Mammary epithelial cell (primary cell): ENCODE measurements at regions of chr6 and their contacts with region 1.

Region 1: DNA sequence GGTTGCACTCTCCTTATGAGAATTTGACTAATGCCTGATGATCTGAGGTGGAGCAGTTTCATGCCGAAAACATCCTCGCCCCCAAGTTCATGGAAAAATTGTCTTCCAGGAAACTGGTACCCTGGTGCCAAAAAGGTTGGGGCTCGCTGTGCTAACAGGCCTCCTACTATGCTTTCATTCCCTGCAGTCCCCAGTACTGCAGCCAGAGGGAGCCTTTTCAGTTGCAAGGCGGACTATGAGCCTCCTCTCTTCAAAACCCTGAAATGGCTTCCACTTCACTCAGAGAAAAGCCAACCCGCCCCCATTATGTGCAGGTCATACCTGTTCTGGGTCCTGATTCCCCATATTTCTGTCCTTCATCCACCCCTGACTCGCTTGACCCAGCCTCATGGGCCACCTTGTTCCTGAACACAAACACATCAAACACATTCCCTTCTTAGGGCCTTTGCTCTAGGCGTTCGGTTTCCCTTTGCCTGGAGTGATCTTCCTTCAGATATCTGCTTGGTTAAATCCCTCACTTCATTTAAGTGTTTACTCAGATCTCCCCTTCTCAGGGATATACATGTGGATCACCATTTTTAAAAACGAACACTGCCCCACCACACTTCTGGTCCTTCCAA is 173.7 kb downstream of the PHACTR1 start:
- DNase-seq: no peak
- H3K4me3 ChIP-seq: no peak overlapping the region
- H3K27ac ChIP-seq: no peak overlapping the region
- H3K4me1 ChIP-seq: no peaks in the 10 kb centered on the region
- H3K27me3 ChIP-seq: no peaks in the 10 kb centered on the region
- CTCF ChIP-seq: peak; percentile 53 to 59

Region 2: GRCh38 chr6:12637960-12638641 is 252.2 kb before region 1 on chr6:
- CTCF ChIA-PET with region 1: interaction called, 5 read pairs
- dilution Hi-C with region 1: no loop called
- in situ Hi-C with region 1: loop called in 1 of 2 experiments (anchors 10 kb)
- intact Hi-C with region 1: loop called (anchors 1 kb)
- DNase-seq: peak; percentile 68
- H3K4me3 ChIP-seq: no peak overlapping the region
- H3K27ac ChIP-seq: no peak overlapping the region
- H3K4me1 ChIP-seq: no peaks in the 10 kb centered on the region
- H3K27me3 ChIP-seq: no peaks in the 10 kb centered on the region
- CTCF ChIP-seq: peak; percentile 73 to 87

Region 3: GRCh38 chr6:12648171-12648570 is 242.1 kb before region 1 on chr6:
- CTCF ChIA-PET with region 1: no interaction called
- dilution Hi-C with region 1: no loop called
- in situ Hi-C with region 1: loop called in 1 of 2 experiments (anchors 10 kb)
- intact Hi-C with region 1: no loop called
- DNase-seq: no peak
- H3K4me3 ChIP-seq: no peak overlapping the region
- H3K27ac ChIP-seq: no peak overlapping the region
- H3K4me1 ChIP-seq: no peaks in the 10 kb centered on the region
- H3K27me3 ChIP-seq: no peaks in the 10 kb centered on the region
- CTCF ChIP-seq: no peak

Region 4: DNA sequence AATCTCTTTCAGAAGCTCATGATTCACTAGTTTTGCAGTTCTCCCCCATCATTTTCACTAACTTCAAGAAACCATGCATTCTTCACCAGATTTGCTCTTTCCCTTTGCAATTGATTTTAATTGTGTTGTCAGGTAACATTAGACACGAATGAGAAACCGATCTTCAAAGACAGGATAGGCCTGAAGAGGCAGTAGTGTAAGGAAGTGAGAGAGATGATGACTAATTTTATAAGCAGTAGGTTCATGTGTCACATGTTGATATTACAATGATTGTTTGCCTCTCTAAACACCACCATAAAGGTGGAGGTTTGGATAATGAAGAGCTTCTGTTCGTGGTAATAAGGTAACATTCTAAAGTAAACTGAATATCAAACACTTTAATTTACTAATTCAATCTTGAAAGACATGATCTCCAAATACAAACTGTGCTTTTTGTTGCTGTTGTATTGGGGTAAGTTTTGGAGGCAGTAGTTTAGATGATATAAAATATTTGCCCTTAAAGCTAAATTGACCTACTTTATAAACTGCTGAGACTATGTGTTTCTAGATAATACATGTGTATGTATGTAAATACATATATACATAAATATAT is 33.5 kb after region 1 on chr6:
- CTCF ChIA-PET with region 1: no interaction called
- dilution Hi-C with region 1: no loop called
- in situ Hi-C with region 1: no loop called
- intact Hi-C with region 1: no loop called
- DNase-seq: no peak
- H3K4me3 ChIP-seq: no peak overlapping the region
- H3K27ac ChIP-seq: no peak overlapping the region
- H3K4me1 ChIP-seq: no peaks in the 10 kb centered on the region
- H3K27me3 ChIP-seq: no peaks in the 10 kb centered on the region
- CTCF ChIP-seq: no peak

Region 5: GRCh38 chr6:13261464-13261994 is 371.2 kb after region 1 on chr6:
- CTCF ChIA-PET with region 1: no interaction called
- dilution Hi-C with region 1: no loop called
- in situ Hi-C with region 1: no loop called
- intact Hi-C with region 1: no loop called
- DNase-seq: no peak
- H3K4me3 ChIP-seq: no peak overlapping the region
- H3K27ac ChIP-seq: no peak overlapping the region
- H3K4me1 ChIP-seq: no peaks in the 10 kb centered on the region
- H3K27me3 ChIP-seq: no peaks in the 10 kb centered on the region
- CTCF ChIP-seq: no peak